HepG2 (cell line): ENCODE measurements at regions of chr4 and their contacts with region 1.

Region 1: GRCh38 chr4:55358668-55359067 is 12.6 kb downstream of the SRD5A3 start:
- DNase-seq: no peak
- ATAC-seq: no peak
- H3K4me3 ChIP-seq: no peak overlapping the region
- H3K27ac ChIP-seq: no peak overlapping the region
- H3K4me1 ChIP-seq: peaks cover 10% of the 10 kb centered on the region
- H3K27me3 ChIP-seq: no peaks in the 10 kb centered on the region
- CTCF ChIP-seq: no peak
- EP300 ChIP-seq: no peak
- POLR2A ChIP-seq: no peak
- RAD21 ChIP-seq: no peak

Region 2: DNA sequence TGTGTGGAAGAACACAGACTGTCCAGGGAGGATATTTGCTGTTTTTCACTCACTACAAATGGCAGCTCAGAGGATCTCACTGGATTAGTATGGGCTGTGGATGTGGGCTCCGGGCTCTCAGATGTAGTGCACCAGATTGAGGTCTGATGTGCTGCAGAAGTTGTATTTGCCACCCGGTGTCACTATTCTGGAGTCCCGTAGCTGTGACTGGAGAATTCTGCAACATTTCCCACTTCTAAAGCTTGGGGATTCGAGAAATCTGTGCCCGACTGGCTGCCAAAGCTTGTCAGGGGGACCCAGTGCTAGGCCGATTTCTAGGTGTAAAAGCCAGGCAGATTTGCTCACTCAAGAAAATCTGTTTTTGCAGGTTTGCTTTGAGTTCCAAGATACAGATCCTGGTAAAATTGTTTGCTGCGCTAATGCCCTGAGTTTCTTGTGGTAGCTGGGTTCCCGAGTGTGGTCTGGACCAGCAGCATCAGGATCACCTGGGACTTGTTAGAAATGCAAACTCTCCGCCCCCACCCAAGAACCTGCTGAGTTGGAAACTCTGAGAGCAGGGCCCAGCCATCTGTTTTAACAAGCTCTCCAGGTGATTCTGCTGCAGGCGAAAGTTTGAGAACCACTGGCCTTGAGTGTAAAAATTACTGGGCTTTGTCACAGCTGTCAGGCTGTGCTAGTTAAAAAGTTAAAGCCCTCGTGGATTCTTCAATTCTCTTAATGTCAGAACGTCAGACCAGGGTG is 682.8 kb before region 1 on chr4:
- CTCF ChIA-PET with region 1: no interaction called
- POLR2A ChIA-PET with region 1: no interaction called
- in situ Hi-C with region 1: no loop called
- intact Hi-C with region 1: no loop called
- DNase-seq: no peak
- ATAC-seq: no peak
- H3K4me3 ChIP-seq: no peak overlapping the region
- H3K27ac ChIP-seq: no peak overlapping the region
- H3K4me1 ChIP-seq: no peaks in the 10 kb centered on the region
- H3K27me3 ChIP-seq: peaks cover 0 to 4% of the 10 kb centered on the region in 2 experiments; a peak in 2 of 5 replicates
- CTCF ChIP-seq: no peak
- EP300 ChIP-seq: no peak
- POLR2A ChIP-seq: no peak
- RAD21 ChIP-seq: no peak

Region 3: GRCh38 chr4:55466001-55466400 is 107.3 kb after region 1 on chr4:
- CTCF ChIA-PET with region 1: no interaction called
- POLR2A ChIA-PET with region 1: no interaction called
- in situ Hi-C with region 1: no loop called
- intact Hi-C with region 1: no loop called
- DNase-seq: no peak
- ATAC-seq: no peak
- H3K4me3 ChIP-seq: no peak overlapping the region
- H3K27ac ChIP-seq: no peak overlapping the region
- H3K4me1 ChIP-seq: no peaks in the 10 kb centered on the region
- H3K27me3 ChIP-seq: no peaks in the 10 kb centered on the region
- CTCF ChIP-seq: no peak
- EP300 ChIP-seq: no peak
- POLR2A ChIP-seq: no peak
- RAD21 ChIP-seq: no peak

Region 4: GRCh38 chr4:55625835-55626234 is 267.2 kb after region 1 on chr4:
- CTCF ChIA-PET with region 1: no interaction called
- POLR2A ChIA-PET with region 1: no interaction called
- in situ Hi-C with region 1: no loop called
- intact Hi-C with region 1: loop called (anchors 5 kb)
- DNase-seq: no peak
- ATAC-seq: no peak
- H3K4me3 ChIP-seq: no peak overlapping the region
- H3K27ac ChIP-seq: no peak overlapping the region
- H3K4me1 ChIP-seq: no peaks in the 10 kb centered on the region
- H3K27me3 ChIP-seq: no peaks in the 10 kb centered on the region
- CTCF ChIP-seq: no peak
- EP300 ChIP-seq: no peak
- POLR2A ChIP-seq: no peak
- RAD21 ChIP-seq: no peak